OCI-LY7 (cell line): ENCODE measurements at regions of chr6 and their contacts with region 1.

Region 1: GRCh38 chr6:57130661-57131177 is 40.7 kb downstream of the ZNF451 start:
- DNase-seq: no peak
- H3K4me3 ChIP-seq: no peak overlapping the region
- H3K27ac ChIP-seq: no peak overlapping the region
- H3K4me1 ChIP-seq: no peaks in the 10 kb centered on the region
- CTCF ChIP-seq: no peak

Region 2: DNA sequence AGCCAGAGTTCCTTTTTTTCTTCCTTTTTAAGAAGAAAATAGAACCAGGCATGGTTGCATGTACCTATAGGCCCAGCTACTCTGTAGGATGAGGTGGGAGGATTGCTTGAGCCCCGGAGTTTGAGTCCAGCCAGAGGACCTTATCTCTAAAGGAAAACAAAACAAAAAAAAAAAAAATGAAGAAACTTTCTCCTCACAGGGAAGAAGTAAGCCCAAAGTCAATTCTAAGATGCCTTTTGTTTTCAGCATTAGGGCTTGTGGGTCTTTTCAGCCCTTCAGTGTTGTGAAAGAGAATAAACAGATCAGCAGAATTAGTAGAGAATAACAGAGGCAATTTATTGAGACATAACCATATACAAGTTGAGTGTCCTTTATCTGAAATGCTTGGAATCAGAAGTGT is 13.9 kb before region 1 on chr6:
- CTCF ChIA-PET with region 1: no interaction called
- POLR2A ChIA-PET with region 1: interaction called, 24 read pairs
- intact Hi-C with region 1: no loop called
- DNase-seq: no peak
- H3K4me3 ChIP-seq: no peak overlapping the region
- H3K27ac ChIP-seq: no peak overlapping the region
- H3K4me1 ChIP-seq: no peaks in the 10 kb centered on the region
- CTCF ChIP-seq: no peak

Region 3: DNA sequence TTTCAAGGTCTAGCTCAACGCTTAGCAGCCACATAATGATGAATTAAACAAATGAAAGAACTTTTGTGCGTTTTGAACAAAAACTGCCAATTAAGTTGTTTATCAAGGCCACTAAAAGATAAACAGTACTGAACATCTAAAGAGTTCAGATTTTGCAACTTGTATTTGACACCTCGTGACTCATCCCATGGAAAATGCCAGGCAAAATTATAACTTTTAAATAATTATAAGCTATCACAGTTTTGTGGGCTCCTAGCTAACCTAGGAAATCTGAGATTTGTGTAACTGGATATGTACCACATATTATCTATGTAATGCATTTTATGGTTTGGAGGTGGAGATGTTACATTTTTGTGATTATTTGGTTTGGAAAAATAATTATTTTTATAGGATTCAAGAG is 31.8 kb after region 1 on chr6:
- CTCF ChIA-PET with region 1: no interaction called
- POLR2A ChIA-PET with region 1: interaction called, 5 read pairs
- intact Hi-C with region 1: loop called (anchors 5 kb)
- DNase-seq: no peak
- H3K4me3 ChIP-seq: no peak overlapping the region
- H3K27ac ChIP-seq: no peak overlapping the region
- H3K4me1 ChIP-seq: no peaks in the 10 kb centered on the region
- CTCF ChIP-seq: no peak

Region 4: DNA sequence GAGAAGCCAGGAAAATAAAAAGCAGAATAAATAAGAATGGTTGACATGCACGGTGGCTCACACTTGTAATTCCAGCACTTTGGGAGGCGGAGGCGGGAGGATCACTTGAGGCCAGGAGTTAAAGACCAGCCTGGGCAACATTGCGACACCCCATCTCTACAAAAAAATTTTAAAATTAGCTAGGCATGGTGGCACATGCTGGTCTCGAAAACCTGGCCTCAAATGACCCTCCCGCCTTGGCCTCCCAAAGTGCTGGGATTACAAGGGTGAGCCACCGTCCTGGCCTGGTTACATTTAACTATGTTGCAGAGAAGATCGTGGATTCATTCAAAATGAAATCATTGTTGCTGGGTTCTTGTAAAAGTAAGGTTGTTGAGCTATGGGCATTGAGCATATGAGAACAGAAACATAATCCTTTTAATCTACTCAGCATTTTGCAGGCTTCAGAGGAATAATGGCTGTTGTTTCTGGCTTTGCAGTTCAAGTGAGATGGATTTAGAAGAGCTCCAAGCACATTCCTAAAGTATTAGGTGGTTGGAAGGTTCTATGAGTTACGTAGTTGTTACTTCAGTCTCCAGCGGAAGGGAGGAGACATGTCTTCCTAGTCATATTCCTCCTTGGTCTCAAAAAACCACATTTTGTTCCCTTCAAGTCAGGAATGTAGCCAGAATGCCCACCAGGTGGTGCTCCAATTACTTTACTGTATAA is 137.0 kb after region 1 on chr6:
- CTCF ChIA-PET with region 1: no interaction called
- POLR2A ChIA-PET with region 1: no interaction called
- intact Hi-C with region 1: no loop called
- DNase-seq: peak; percentile 46
- H3K4me3 ChIP-seq: no peak overlapping the region
- H3K27ac ChIP-seq: no peak overlapping the region
- H3K4me1 ChIP-seq: no peaks in the 10 kb centered on the region
- CTCF ChIP-seq: peak; percentile 82